Activated B cell treated with CpG ODN at 0.5 μM for 24 hours (primary cell): ENCODE measurements at regions of chr7 and their contacts with region 1.

Region 1: GRCh38 chr7:101542527-101543241 is 86.4 kb downstream of the MYL10 start:
- DNase-seq: peak; percentile 71
- ATAC-seq: peak; percentile 68
- H3K4me3 Mint-ChIP-seq: no peak overlapping the region
- H3K27ac Mint-ChIP-seq: no peak overlapping the region
- H3K4me1 Mint-ChIP-seq: no peaks in the 10 kb centered on the region
- H3K27me3 Mint-ChIP-seq: peaks cover 2% of the 10 kb centered on the region
- CTCF ChIP-seq: peak; percentile 26

Region 2: GRCh38 chr7:101586078-101586905 is 43.6 kb after region 1 on chr7:
- CTCF ChIA-PET with region 1: no interaction called
- POLR2A ChIA-PET with region 1: no interaction called
- intact Hi-C with region 1: no loop called
- DNase-seq: no peak
- ATAC-seq: no peak
- H3K4me3 Mint-ChIP-seq: no peak overlapping the region
- H3K27ac Mint-ChIP-seq: no peak overlapping the region
- H3K4me1 Mint-ChIP-seq: no peaks in the 10 kb centered on the region
- H3K27me3 Mint-ChIP-seq: peaks cover 5% of the 10 kb centered on the region
- CTCF ChIP-seq: no peak

Region 3: DNA sequence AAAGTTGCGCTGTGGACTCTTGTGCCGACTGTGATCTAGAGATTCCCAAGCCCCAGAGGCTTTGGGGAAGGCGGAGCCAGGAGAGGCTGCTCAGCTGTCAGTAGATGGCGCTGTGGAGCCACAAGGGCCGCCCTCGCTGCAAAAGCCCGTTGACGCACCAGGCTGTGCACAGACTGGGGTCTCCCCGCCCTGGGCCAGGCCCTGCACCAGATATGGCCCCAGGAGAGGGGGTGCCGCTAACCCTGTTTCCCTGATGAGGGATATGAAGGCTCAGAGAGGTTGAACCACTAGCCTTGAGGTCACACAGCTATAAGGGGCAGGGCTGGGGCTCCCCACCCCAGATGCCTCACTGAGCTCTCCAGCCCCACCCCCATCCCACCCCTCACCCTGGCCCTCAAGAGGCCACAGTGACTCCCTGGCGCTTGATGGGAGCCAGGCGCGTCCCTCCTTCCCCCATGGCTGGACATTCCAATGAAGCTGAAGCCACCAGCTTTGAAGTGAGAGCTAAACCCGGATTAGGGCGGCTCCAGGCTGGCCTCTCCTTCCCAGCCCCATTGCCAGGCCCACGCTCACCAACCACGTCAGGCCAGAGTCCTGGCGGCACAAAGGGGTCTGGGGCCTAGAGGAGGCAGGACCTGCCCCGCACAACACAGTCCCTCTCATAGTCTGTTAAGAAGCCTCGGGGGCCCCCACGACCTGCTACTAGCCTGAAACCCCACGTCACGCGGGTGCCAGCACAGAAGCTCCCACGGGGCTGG is 60.0 kb after region 1 on chr7:
- CTCF ChIA-PET with region 1: no interaction called
- POLR2A ChIA-PET with region 1: no interaction called
- intact Hi-C with region 1: loop called (anchors 1 kb)
- DNase-seq: peak; percentile 59
- ATAC-seq: peak; percentile 91
- H3K4me3 Mint-ChIP-seq: no peak overlapping the region
- H3K27ac Mint-ChIP-seq: no peak overlapping the region
- H3K4me1 Mint-ChIP-seq: no peaks in the 10 kb centered on the region
- H3K27me3 Mint-ChIP-seq: no peaks in the 10 kb centered on the region
- CTCF ChIP-seq: no peak

Region 4: DNA sequence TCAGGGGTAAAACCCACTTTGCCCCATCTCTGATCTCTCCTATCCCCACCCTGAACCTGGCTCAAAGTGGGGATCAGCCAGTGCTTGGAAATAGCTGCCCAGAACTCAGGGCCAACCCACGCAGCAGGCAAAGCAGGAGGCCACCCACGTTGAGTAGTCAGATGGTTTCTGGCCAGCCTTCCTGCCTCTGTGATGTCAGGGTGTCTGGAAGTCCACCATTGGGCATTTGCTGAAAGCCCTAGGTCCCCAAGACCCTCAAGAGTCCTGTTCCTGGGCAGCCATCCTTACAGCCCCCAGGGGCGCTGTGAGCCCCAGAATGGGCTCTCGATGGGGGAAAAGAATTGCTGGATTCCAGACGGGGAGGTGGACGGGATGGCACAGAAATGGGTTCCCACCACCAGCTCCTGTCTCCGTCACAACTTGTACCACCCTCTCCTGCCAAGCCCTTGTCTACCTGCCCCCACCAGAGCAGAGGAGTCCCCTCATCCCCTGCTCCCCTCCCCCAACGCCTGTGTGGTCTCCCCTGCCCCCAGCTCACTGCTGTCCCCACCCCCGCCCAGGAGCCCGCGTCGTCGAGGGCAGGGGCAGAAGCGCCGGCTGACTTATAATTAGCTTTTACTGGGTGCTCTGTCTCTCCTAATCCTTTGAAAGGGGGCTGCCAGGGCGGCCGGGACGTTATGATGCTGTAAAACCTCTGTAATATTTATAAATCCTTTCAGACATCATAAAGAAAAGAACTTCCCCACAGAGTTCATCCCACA is 82.5 kb after region 1 on chr7:
- CTCF ChIA-PET with region 1: no interaction called
- POLR2A ChIA-PET with region 1: no interaction called
- intact Hi-C with region 1: no loop called
- DNase-seq: no peak
- ATAC-seq: no peak
- H3K4me3 Mint-ChIP-seq: no peak overlapping the region
- H3K27ac Mint-ChIP-seq: no peak overlapping the region
- H3K4me1 Mint-ChIP-seq: no peaks in the 10 kb centered on the region
- H3K27me3 Mint-ChIP-seq: peaks cover 23% of the 10 kb centered on the region
- CTCF ChIP-seq: no peak

Region 5: DNA sequence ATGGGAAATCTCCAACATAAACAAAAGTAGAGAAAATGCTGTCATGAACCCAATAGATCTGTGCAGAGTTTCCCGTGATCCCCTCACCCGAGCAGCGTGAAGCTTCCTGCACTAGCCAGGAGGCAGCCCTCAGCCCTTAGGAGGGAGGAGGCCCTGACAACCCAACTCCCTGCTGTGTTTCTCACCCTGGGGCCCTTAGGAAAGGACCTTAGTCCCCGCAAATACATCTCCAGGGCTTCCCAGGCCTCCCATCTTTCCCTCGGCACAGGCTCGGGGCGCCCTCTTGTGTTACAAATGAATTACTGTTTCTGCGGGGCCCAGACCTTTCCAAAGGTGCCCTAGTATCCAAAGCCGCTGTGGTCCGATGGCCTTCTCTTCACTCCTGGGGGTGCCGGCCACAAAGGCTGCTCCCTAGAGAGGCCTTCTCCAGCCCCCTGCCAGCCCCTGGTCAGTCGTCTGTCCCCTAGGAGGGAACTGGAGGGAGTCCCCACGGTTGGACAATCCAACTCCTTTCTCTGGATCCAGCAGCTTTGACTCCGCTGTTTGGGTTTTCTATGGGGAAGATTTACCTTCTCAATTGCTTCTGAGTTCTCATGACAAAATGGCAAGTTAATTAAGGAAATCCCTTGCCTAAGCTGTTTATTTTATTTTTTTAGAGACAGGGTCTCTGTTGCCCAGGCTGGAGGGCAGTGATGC is 694.1 kb after region 1 on chr7:
- CTCF ChIA-PET with region 1: interaction called, 5 read pairs
- POLR2A ChIA-PET with region 1: no interaction called
- intact Hi-C with region 1: loop called (anchors 1 kb)
- DNase-seq: peak; percentile 39
- ATAC-seq: peak; percentile 70
- H3K4me3 Mint-ChIP-seq: no peak overlapping the region
- H3K27ac Mint-ChIP-seq: no peak overlapping the region
- H3K4me1 Mint-ChIP-seq: no peaks in the 10 kb centered on the region
- H3K27me3 Mint-ChIP-seq: no peaks in the 10 kb centered on the region
- CTCF ChIP-seq: peak; percentile 26

Region 6: DNA sequence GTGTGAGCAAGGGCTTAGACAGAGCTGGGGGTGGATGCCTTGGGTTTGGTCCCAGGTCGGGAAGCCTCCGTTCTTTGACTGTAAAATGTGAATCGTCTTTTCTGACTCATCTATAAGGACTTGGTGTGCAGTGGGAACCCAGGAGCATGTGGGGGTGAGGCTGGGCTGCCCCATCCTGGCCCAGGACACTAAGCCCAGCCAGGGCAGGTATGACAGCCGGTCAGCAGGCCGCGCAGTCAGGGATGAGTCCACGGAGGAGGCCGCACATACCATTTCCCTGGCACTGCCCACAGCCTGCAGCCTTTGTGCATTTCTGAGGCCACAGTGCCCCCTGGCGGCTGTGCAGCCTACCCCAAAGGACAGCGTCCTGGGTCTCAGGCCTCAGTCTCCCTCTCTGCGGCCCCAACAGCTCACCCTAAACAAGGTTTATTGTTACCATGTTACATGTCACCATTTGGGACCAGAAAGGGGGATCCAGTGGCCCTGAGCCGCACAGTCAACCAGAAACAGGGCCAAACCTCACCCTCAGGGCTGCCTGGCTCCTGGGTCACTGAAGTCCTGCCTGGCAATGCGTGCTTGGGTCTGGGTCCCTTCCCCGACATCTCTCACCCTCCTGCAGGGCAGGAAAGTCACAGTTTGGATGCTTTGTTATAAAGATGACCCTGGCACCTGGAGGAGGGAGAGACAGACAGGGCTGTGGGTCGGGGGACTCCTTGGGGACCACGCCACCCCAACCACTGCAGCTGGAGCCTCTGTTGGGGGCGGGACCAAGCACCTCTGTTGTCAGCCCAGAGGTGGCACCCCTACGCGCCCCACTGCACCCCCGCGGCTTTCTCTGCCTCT is 729.6 kb after region 1 on chr7:
- CTCF ChIA-PET with region 1: interaction called, 64 read pairs
- POLR2A ChIA-PET with region 1: no interaction called
- intact Hi-C with region 1: no loop called
- DNase-seq: peak; percentile 80
- ATAC-seq: peak; percentile 92
- H3K4me3 Mint-ChIP-seq: no peak overlapping the region
- H3K27ac Mint-ChIP-seq: no peak overlapping the region
- H3K4me1 Mint-ChIP-seq: peaks cover 4% of the 10 kb centered on the region
- H3K27me3 Mint-ChIP-seq: no peaks in the 10 kb centered on the region
- CTCF ChIP-seq: peak; percentile 28

Region 7: GRCh38 chr7:102390697-102391484 is 848.2 kb after region 1 on chr7:
- CTCF ChIA-PET with region 1: no interaction called
- POLR2A ChIA-PET with region 1: no interaction called
- intact Hi-C with region 1: loop called (anchors 1 kb)
- DNase-seq: peak; percentile 69
- ATAC-seq: peak; percentile 74
- H3K4me3 Mint-ChIP-seq: no peak overlapping the region
- H3K27ac Mint-ChIP-seq: no peak overlapping the region
- H3K4me1 Mint-ChIP-seq: peaks cover 14% of the 10 kb centered on the region
- H3K27me3 Mint-ChIP-seq: no peaks in the 10 kb centered on the region
- CTCF ChIP-seq: no peak